ENCODE measurements at regions of chr9 and their contacts with region 1.

Region 1: GRCh38 chr9:122125158-122125508 is 32.0 kb upstream of the TTLL11 start:
- DNase-seq: no peak
- ATAC-seq: peak; percentile 93
- H3K4me3 ChIP-seq: no peak overlapping the region
- H3K27ac ChIP-seq: no peak overlapping the region
- H3K4me1 ChIP-seq: no peaks in the 10 kb centered on the region
- H3K27me3 ChIP-seq: peaks cover 2 to 10% of the 10 kb centered on the region in 2 experiments; a peak in 2 of 4 replicates
- CTCF ChIP-seq: peak; percentile 89 to 92 (median 91)
- EP300 ChIP-seq: no peak
- POLR2A ChIP-seq: no peak
- RAD21 ChIP-seq: peak; percentile 97

Region 2: GRCh38 chr9:121545875-121546423 is 579.2 kb before region 1 on chr9:
- CTCF ChIA-PET with region 1: no interaction called
- POLR2A ChIA-PET with region 1: no interaction called
- RAD21 ChIA-PET with region 1: no interaction called
- SMC1A ChIA-PET with region 1: no interaction called
- in situ Hi-C with region 1: no loop called
- intact Hi-C with region 1: loop called (anchors 10 kb)
- DNase-seq: no peak
- ATAC-seq: peak; percentile 99
- H3K4me3 ChIP-seq: no peak overlapping the region
- H3K27ac ChIP-seq: no peak overlapping the region
- H3K4me1 ChIP-seq: no peaks in the 10 kb centered on the region
- H3K27me3 ChIP-seq: no peaks in the 10 kb centered on the region
- CTCF ChIP-seq: peak; percentile 88 to 98 (median 89)
- EP300 ChIP-seq: no peak
- POLR2A ChIP-seq: no peak
- RAD21 ChIP-seq: peak; percentile 96

Region 3: DNA sequence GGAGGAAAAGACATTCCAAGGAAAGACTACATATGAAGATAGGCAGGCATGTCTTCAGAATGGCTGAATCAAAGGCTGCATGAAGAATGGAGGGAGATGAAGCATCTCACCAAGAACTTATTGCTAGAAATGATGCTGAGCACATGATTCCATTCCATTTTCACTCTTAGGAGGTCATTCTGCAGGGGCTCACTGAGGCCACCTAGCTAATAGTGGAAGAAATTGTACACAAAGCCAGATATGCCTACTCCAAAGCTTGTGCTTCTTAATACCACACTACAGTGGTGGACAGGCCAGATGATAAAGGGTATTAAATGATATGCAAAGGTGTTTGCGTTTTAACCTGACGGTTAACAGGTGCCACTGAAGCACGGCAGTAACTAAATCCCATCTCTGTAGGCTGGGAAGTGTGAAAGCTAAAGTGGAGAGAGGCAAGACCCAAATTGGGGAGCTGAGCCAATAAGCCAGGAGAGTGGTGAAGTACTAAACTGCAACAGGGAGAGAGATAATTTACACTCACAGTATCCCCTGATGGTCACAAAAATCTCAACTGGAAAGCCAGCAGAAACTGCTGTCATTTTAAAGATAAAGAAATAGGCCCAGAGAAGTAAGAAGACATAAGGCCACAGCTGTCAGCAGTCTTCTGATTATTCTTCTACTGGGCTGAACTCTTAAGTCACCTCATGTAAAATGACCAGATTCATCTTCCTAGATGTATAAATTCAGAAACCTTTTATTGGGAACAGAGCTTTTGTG is 19.9 kb after region 1 on chr9:
- CTCF ChIA-PET with region 1: interaction called, 24 read pairs
- POLR2A ChIA-PET with region 1: no interaction called
- RAD21 ChIA-PET with region 1: interaction called, 3 read pairs
- SMC1A ChIA-PET with region 1: no interaction called
- in situ Hi-C with region 1: no loop called
- intact Hi-C with region 1: no loop called
- DNase-seq: no peak
- ATAC-seq: peak; percentile 47; the same call in 1 of the 3 replicates
- H3K4me3 ChIP-seq: no peak overlapping the region
- H3K27ac ChIP-seq: no peak overlapping the region
- H3K4me1 ChIP-seq: no peaks in the 10 kb centered on the region
- H3K27me3 ChIP-seq: no peaks in the 10 kb centered on the region
- CTCF ChIP-seq: peak; percentile 37 to 47 (median 40); a peak in 4 of 6 replicates
- EP300 ChIP-seq: no peak
- POLR2A ChIP-seq: no peak
- RAD21 ChIP-seq: no peak

Region 4: GRCh38 chr9:122350638-122351355 is 225.7 kb after region 1 on chr9:
- CTCF ChIA-PET with region 1: interaction called, 190 read pairs
- POLR2A ChIA-PET with region 1: no interaction called
- RAD21 ChIA-PET with region 1: interaction called, 73 read pairs
- SMC1A ChIA-PET with region 1: interaction called, 37 read pairs
- in situ Hi-C with region 1: loop called (anchors 5 kb)
- intact Hi-C with region 1: loop called (anchors 1 kb)
- DNase-seq: no peak
- ATAC-seq: peak; percentile 98
- H3K4me3 ChIP-seq: no peak overlapping the region
- H3K27ac ChIP-seq: no peak overlapping the region
- H3K4me1 ChIP-seq: no peaks in the 10 kb centered on the region; the same call in 1 of the 2 replicates
- H3K27me3 ChIP-seq: peaks cover 2 to 8% of the 10 kb centered on the region in 2 experiments; a peak in 2 of 4 replicates
- CTCF ChIP-seq: peak; percentile 93 to 97 (median 93); a peak in 5 of 6 replicates
- EP300 ChIP-seq: no peak
- POLR2A ChIP-seq: no peak
- RAD21 ChIP-seq: peak; percentile 98

Region 5: DNA sequence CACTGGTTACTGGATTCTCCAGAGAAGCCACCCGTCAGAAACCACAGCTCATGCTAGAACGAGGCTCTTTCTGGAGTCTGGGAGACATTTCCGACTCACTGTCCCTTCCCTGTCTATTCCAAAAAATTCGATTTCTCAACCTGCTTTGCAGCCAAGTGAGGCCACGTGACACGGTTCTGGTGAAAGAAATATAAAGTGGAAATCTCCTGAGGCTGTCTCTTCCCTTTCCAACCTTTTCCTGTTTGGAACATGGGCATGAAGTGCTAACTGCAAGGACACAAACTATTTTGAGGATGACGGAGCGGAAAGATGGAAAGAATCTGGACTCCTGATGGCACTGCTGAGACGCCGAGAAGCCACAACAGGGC is 239.6 kb after region 1 on chr9:
- CTCF ChIA-PET with region 1: interaction called, 10 read pairs
- POLR2A ChIA-PET with region 1: no interaction called
- RAD21 ChIA-PET with region 1: interaction called, 3 read pairs
- SMC1A ChIA-PET with region 1: no interaction called
- in situ Hi-C with region 1: no loop called
- intact Hi-C with region 1: no loop called
- DNase-seq: no peak
- ATAC-seq: no peak
- H3K4me3 ChIP-seq: no peak overlapping the region
- H3K27ac ChIP-seq: no peak overlapping the region
- H3K4me1 ChIP-seq: peaks cover 11% of the 10 kb centered on the region
- H3K27me3 ChIP-seq: no peaks in the 10 kb centered on the region; a peak in 1 of 4 replicates
- CTCF ChIP-seq: no peak
- EP300 ChIP-seq: no peak
- POLR2A ChIP-seq: no peak
- RAD21 ChIP-seq: no peak

Region 6: DNA sequence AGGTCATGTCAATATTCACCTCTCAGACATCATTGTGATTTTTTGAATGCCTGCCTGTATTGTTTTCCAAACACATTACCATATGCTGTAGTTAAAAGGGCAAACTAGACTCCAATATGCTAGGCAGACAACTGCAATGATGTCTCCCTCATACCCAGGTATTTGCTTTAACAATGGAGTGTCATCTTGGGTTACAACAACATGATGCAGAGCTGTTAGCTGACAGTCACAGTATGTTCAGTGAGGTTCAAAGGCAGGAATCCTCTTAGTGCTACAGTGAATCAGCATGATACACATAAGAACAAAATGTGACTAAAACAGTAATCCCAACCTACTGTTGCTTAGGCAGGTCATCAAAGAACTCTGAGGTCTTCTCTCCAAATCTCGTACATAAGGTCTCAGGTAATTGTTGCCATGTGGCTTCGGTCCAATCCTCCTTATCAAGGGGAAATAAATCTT is 328.6 kb after region 1 on chr9:
- CTCF ChIA-PET with region 1: interaction called, 9 read pairs
- POLR2A ChIA-PET with region 1: no interaction called
- RAD21 ChIA-PET with region 1: interaction called, 5 read pairs
- SMC1A ChIA-PET with region 1: interaction called, 6 read pairs
- in situ Hi-C with region 1: loop called (anchors 10 kb)
- intact Hi-C with region 1: loop called (anchors 1 kb)
- DNase-seq: no peak
- ATAC-seq: no peak
- H3K4me3 ChIP-seq: no peak overlapping the region
- H3K27ac ChIP-seq: no peak overlapping the region
- H3K4me1 ChIP-seq: no peaks in the 10 kb centered on the region
- H3K27me3 ChIP-seq: no peaks in the 10 kb centered on the region
- CTCF ChIP-seq: no peak
- EP300 ChIP-seq: no peak
- POLR2A ChIP-seq: no peak
- RAD21 ChIP-seq: no peak

Region 7: GRCh38 chr9:122810306-122810946 is 685.3 kb after region 1 on chr9:
- CTCF ChIA-PET with region 1: interaction called, 6 read pairs
- POLR2A ChIA-PET with region 1: no interaction called
- RAD21 ChIA-PET with region 1: interaction called, 5 read pairs
- SMC1A ChIA-PET with region 1: interaction called, 6 read pairs
- in situ Hi-C with region 1: loop called (anchors 5 kb)
- intact Hi-C with region 1: loop called (anchors 1 kb)
- DNase-seq: peak; percentile 43
- ATAC-seq: peak; percentile 96
- H3K4me3 ChIP-seq: no peak overlapping the region
- H3K27ac ChIP-seq: no peak overlapping the region
- H3K4me1 ChIP-seq: no peaks in the 10 kb centered on the region
- H3K27me3 ChIP-seq: no peaks in the 10 kb centered on the region
- CTCF ChIP-seq: peak; percentile 55 to 90 (median 83); a peak in 4 of 6 replicates
- EP300 ChIP-seq: no peak
- POLR2A ChIP-seq: no peak
- RAD21 ChIP-seq: peak; percentile 96